Activated CD8-positive, alpha-beta T cell treated with anti-CD3 and anti-CD28 coated beads for 36 hours (primary cell): ENCODE measurements at regions of chr10 and their contacts with region 1.

Region 1: DNA sequence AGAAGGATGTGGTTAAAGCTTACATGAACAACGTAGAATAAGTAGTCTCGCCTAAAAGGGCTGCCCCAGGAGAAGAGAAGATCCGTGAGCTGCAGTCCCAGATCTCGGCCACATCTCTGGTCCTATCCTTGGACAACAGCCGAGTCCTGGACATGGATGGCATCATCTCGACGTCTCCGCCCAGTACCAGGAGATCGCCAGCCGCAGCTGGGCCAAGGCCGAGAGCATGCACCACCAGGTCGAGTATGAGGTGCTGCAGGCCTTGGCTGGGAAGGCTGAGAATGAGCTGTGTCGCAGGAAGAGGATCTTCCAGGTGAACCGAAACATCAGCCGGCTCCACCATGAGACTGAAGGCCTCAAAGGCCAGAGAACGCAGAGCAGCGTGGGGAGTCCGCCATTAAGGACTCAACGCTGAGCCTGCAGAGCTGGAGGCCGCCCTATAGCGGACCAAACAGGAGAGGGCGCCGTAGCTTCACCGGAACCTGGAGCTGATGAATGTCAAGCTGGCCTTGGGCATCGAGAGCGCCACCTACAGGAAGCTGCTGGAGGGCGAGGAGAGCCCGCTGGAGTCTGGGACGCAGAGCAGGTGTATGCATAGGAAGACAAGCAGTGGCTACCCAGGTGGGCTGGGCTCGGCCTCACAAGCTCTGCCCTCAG is 22.2 kb downstream of the LIPK start:
- DNase-seq: peak; percentile 78
- ATAC-seq: peak; percentile 81
- H3K4me3 Mint-ChIP-seq: no peak overlapping the region
- H3K27ac Mint-ChIP-seq: no peak overlapping the region
- H3K4me1 Mint-ChIP-seq: peaks cover 4% of the 10 kb centered on the region
- H3K27me3 Mint-ChIP-seq: peaks cover 4% of the 10 kb centered on the region
- CTCF ChIP-seq: peak; percentile 61

Region 2: DNA sequence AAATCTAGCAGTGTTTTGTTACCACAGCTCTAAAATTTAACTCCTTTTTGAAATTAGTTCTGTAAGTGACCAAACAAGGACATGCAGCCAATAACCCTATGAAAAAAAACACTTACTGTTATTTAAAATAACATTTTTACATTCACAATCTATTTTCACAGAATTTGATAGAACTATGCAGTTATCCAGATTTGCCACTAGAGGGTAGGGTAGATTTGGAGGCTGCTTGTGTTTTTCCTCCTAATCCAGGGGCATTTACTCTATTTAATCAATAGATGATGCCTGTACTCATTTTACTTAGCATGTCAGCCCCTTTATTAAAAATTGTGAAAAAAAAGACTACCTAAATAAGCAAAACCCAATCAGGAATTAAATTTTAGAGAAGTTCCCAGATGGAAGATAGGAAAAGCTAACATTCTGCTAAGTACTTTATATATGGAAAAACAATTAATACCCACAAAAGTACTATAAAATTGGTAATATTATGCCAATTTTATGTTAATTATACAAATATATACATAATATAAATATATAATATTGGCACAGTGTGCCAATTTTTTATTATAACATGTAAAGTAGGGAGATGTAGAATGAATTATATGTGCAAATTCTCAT is 40.3 kb before region 1 on chr10:
- CTCF ChIA-PET with region 1: interaction called, 33 read pairs
- POLR2A ChIA-PET with region 1: no interaction called
- intact Hi-C with region 1: no loop called
- DNase-seq: no peak
- ATAC-seq: peak; percentile 56
- H3K4me3 Mint-ChIP-seq: no peak overlapping the region
- H3K27ac Mint-ChIP-seq: no peak overlapping the region
- H3K4me1 Mint-ChIP-seq: no peaks in the 10 kb centered on the region
- H3K27me3 Mint-ChIP-seq: peaks cover 3% of the 10 kb centered on the region
- CTCF ChIP-seq: peak; percentile 98

Region 3: DNA sequence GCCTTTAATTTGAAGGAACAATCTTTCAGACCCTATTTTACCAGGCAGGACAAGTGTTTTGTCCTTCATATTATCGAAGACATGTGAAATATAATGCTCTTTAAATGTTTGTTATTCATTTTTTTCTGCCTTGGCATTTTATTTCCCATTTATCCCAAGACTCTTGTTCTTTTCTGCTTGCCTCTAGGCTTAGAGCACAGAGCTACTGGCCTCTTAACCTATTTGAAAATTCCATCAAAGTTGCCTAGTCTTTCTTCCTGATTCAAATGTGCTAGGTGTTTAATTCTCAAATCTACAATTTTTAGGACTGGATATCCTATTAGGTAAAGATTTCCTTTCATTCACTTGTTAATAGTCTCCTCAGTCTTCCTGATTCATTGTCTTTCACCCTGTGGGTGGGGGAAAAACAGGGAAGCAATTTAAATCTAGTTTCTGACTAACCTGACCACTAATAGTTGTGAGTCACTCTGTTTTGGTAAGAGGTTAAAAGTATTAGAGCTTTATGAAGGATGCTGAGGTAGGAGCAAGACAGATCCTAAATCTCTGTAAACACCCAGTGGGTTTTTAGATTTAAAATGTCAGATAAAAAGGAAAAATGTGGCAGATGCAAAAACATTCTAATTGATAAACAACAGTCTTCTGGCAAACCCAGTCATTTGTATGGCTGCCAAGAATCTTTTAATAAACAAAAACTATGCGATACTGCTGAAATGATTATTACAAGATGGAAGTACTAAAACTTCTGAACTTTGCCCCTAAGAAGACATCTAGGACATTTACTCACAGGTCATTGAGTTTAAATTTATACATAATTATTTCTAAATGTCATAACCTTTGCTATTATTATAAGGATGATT is 20.6 kb before region 1 on chr10:
- CTCF ChIA-PET with region 1: interaction called, 10 read pairs
- POLR2A ChIA-PET with region 1: no interaction called
- intact Hi-C with region 1: no loop called
- DNase-seq: peak; percentile 39
- ATAC-seq: peak; percentile 69
- H3K4me3 Mint-ChIP-seq: no peak overlapping the region
- H3K27ac Mint-ChIP-seq: no peak overlapping the region
- H3K4me1 Mint-ChIP-seq: peaks cover 29% of the 10 kb centered on the region
- H3K27me3 Mint-ChIP-seq: peaks cover 4% of the 10 kb centered on the region
- CTCF ChIP-seq: no peak

Region 4: DNA sequence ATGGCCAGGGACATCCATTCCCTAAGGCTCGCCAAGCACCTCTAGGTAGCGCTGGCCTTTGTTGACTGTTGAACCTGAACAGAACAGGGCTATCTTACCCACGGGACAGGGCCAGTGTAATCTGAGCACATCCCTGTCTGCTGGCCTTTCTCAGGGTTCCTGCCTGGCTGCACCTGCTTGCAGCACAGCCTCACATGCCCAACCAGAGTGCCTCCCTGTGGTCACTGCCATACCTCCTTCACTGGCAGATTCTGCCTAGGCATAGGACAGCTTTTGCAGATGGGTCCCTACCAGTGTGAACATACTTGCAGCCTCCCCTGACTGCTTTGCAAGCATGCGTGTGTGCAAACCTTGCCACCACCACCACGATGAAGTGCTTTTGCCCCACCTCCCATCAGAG is 15.8 kb after region 1 on chr10:
- CTCF ChIA-PET with region 1: interaction called, 14 read pairs
- POLR2A ChIA-PET with region 1: no interaction called
- intact Hi-C with region 1: no loop called
- DNase-seq: no peak
- ATAC-seq: no peak
- H3K4me3 Mint-ChIP-seq: no peak overlapping the region
- H3K27ac Mint-ChIP-seq: no peak overlapping the region
- H3K4me1 Mint-ChIP-seq: peaks cover 2% of the 10 kb centered on the region
- H3K27me3 Mint-ChIP-seq: peaks cover 12% of the 10 kb centered on the region
- CTCF ChIP-seq: no peak

Region 5: DNA sequence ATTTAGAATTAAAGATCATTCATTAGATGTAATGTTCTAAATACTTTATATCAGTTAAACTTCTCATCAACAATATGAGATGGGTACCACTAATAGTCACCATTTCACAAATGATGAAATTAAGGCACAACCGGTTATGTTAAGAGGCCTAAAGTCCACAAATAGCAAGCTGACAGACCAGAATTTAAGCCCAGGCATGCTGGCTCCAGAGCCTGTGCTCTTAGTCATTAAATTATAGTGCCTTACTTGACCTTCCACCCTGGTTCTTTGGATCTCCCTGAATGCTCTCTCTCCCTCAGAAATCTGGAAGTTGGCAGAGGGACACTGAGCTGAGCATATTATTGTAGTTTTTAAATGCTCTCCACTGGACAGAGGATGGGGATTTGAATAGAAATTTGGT is 35.2 kb after region 1 on chr10:
- CTCF ChIA-PET with region 1: interaction called, 11 read pairs
- POLR2A ChIA-PET with region 1: no interaction called
- intact Hi-C with region 1: no loop called
- DNase-seq: no peak
- ATAC-seq: no peak
- H3K4me3 Mint-ChIP-seq: no peak overlapping the region
- H3K27ac Mint-ChIP-seq: no peak overlapping the region
- H3K4me1 Mint-ChIP-seq: peaks cover 8% of the 10 kb centered on the region
- H3K27me3 Mint-ChIP-seq: peaks cover 2% of the 10 kb centered on the region
- CTCF ChIP-seq: no peak

Region 6: GRCh38 chr10:89158446-89158845 is 430.2 kb after region 1 on chr10:
- CTCF ChIA-PET with region 1: no interaction called
- POLR2A ChIA-PET with region 1: no interaction called
- intact Hi-C with region 1: no loop called
- DNase-seq: no peak
- ATAC-seq: no peak
- H3K4me3 Mint-ChIP-seq: no peak overlapping the region
- H3K27ac Mint-ChIP-seq: no peak overlapping the region
- H3K4me1 Mint-ChIP-seq: peaks cover 18% of the 10 kb centered on the region
- H3K27me3 Mint-ChIP-seq: peaks cover 25% of the 10 kb centered on the region
- CTCF ChIP-seq: no peak